Heart left ventricle (tissue), 16 donors: ENCODE measurements at regions of chr14 and their contacts with region 1.

Region 1: GRCh38 chr14:105589161-105590062 is 63.0 kb downstream of the TMEM121 start:
- DNase-seq: peak in 1 of 5 donors; percentile 55
- ATAC-seq: peak in 1 of 4 donors; percentile 23
- H3K4me3 ChIP-seq: no peak overlapping the region
- H3K27ac ChIP-seq: no peak overlapping the region
- H3K4me1 ChIP-seq: no peaks in the 10 kb centered on the region
- H3K27me3 ChIP-seq: no peaks in the 10 kb centered on the region
- CTCF ChIP-seq: no peak
- POLR2A ChIP-seq: no peak

Region 2: GRCh38 chr14:105709281-105710118 is 120.1 kb after region 1 on chr14:
- intact Hi-C with region 1: loop called in 2 of 10 experiments (anchors 5 kb)
- DNase-seq: peak in 1 of 5 donors; percentile 48
- ATAC-seq: peak in 1 of 4 donors; percentile 10
- H3K4me3 ChIP-seq: no peak overlapping the region
- H3K27ac ChIP-seq: no peak overlapping the region
- H3K4me1 ChIP-seq: no peaks in the 10 kb centered on the region
- H3K27me3 ChIP-seq: no peaks in the 10 kb centered on the region
- CTCF ChIP-seq: no peak
- POLR2A ChIP-seq: no peak